ENCODE measurements at regions of chr7 and their contacts with region 1.

Region 1: DNA sequence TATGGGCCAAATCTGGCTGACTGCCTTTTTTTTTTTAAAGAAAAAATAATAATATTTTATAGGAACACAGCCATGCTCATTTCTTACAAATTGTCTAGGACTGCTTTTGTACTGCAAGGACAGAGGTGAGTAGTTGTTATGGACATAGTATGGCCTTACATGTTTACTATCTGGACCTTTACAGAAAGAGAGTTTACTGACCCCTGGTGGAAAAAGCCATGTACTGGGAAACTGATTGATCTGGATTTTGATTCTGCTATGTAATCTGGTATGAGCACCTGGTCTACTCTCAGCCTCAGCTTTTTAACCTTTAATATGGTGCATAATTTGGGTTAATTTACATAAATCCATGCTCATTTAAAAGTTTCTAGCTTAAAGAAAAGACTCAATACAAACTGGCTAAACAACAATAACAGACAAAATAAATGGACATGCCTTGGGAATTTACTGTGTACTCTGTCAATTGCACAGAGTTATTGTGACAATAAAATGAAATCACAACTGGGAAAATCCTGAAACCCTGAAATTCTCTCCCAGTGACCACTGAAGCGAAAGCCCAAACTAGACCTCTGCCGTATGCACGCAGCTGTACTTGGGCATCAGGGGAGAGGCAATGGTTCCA is 260.7 kb downstream of the BMPER start:
- DNase-seq: no peak
- H3K4me3 ChIP-seq: no peak overlapping the region
- H3K27ac ChIP-seq: no peak overlapping the region
- H3K4me1 ChIP-seq: no peaks in the 10 kb centered on the region
- H3K27me3 ChIP-seq: no peaks in the 10 kb centered on the region
- CTCF ChIP-seq: peak; percentile 34 to 66 (median 50)
- POLR2A ChIP-seq: no peak

Region 2: GRCh38 chr7:33757562-33758165 is 408.4 kb before region 1 on chr7:
- intact Hi-C with region 1: loop called (anchors 10 kb)
- DNase-seq: peak; percentile 25
- H3K4me3 ChIP-seq: no peak overlapping the region
- H3K27ac ChIP-seq: no peak overlapping the region
- H3K4me1 ChIP-seq: no peaks in the 10 kb centered on the region
- H3K27me3 ChIP-seq: no peaks in the 10 kb centered on the region
- CTCF ChIP-seq: peak in 3 of 4 experiments; percentile 63 to 90 (median 63)
- POLR2A ChIP-seq: no peak

Region 3: GRCh38 chr7:33986941-33987588 is 179.0 kb before region 1 on chr7:
- intact Hi-C with region 1: loop called (anchors 10 kb)
- DNase-seq: no peak
- H3K4me3 ChIP-seq: no peak overlapping the region
- H3K27ac ChIP-seq: peak overlapping the region; percentile 9 to 34
- H3K4me1 ChIP-seq: no peaks in the 10 kb centered on the region
- H3K27me3 ChIP-seq: no peaks in the 10 kb centered on the region
- CTCF ChIP-seq: no peak
- POLR2A ChIP-seq: no peak

Region 4: GRCh38 chr7:34048445-34048844 is 117.6 kb before region 1 on chr7:
- intact Hi-C with region 1: no loop called
- DNase-seq: no peak
- H3K4me3 ChIP-seq: no peak overlapping the region
- H3K27ac ChIP-seq: no peak overlapping the region
- H3K4me1 ChIP-seq: no peaks in the 10 kb centered on the region
- H3K27me3 ChIP-seq: no peaks in the 10 kb centered on the region
- CTCF ChIP-seq: no peak
- POLR2A ChIP-seq: no peak

Region 5: DNA sequence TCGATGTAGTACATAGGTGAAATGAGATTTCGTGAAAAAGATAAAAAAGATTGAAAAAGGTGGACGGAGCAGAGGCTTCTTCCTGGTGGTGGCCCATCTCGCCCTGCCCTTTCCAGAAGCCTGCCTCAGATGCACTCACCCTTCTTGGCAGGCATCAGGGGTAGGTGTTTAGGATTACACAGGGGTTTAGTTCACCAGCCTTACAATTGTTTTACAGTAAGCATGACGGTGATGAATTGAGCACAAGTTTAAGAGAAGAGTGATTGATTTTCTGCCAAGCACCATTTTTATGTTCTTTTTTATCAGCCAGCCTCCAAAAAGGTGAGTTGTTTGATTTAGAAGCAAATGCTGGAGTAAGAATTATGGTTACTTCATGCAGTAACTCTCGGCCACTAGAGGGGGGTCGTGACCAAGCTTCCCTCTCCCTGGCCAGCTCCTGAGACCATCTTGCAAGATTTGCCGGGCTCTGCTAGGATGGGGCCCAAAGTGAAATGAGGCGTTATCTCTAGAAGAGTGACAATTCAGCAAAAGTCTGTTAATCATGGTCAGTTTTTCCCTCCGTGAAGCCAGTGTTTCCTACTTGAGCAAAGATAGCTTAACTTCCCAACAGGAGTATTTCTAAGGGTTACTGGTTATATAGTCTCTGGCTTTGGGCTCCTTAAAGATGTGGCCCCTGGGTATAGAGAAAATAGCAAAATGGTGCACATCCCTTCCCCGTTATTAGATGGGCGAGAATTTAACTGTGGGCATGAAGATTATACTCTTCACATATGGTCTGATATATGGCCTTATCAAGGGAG is 31.9 kb before region 1 on chr7:
- intact Hi-C with region 1: loop called (anchors 5 kb)
- DNase-seq: peak; percentile 85
- H3K4me3 ChIP-seq: no peak overlapping the region
- H3K27ac ChIP-seq: peak overlapping the region; percentile 55 to 59
- H3K4me1 ChIP-seq: peaks cover 6% of the 10 kb centered on the region
- H3K27me3 ChIP-seq: no peaks in the 10 kb centered on the region
- CTCF ChIP-seq: peak; percentile 44 to 81 (median 73)
- POLR2A ChIP-seq: no peak